HEK293 (cell line): ENCODE measurements at regions of chr4 and their contacts with region 1.

Region 1: DNA sequence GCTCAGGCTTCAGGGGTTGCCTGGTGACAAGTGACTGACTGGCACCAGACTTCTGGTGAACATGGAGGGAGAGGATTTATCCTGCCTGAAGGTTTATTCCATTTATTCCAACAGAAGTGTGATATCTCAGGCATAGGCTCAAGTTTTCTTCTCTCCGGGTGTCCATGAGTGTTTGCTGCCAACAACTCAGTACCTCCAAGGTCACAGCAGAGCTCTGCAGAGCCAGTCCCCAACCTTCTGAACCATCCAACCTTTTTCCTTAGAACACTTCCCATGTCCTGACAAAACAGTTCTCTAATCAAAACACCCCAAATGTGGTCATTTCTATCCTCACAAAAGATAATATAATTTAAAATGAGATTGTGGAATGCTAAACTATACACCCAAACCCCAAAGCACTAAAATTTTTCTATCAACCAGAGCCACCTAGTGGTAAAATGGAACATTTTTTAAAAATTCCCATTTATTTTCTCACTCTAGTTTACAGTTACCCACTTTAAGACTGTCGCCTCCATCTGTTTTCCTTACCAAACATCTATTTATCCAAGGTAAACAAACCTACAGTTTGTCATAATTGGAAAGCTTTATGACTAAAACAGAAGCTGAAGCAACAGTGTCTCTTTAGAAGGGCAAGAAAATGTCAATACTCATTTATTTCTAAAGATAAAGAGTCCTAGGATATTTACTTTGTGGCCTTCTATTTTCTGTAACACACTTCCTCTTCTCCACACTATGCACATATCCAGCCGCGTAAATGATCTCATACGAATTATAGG is 39.6 kb downstream of the TMEM154 start:
- H3K4me3 ChIP-seq: no peak overlapping the region
- H3K27ac ChIP-seq: no peak overlapping the region
- H3K4me1 ChIP-seq: no peaks in the 10 kb centered on the region
- CTCF ChIP-seq: no peak

Region 2: GRCh38 chr4:152454398-152455011 is 185.7 kb before region 1 on chr4:
- CTCF ChIA-PET with region 1: interaction called, 11 read pairs
- POLR2A ChIA-PET with region 1: no interaction called
- H3K4me3 ChIP-seq: no peak overlapping the region
- H3K27ac ChIP-seq: no peak overlapping the region
- H3K4me1 ChIP-seq: no peaks in the 10 kb centered on the region
- CTCF ChIP-seq: no peak

Region 3: GRCh38 chr4:152663203-152664066 is 23.2 kb after region 1 on chr4:
- CTCF ChIA-PET with region 1: no interaction called
- POLR2A ChIA-PET with region 1: no interaction called
- H3K4me3 ChIP-seq: no peak overlapping the region
- H3K27ac ChIP-seq: no peak overlapping the region
- H3K4me1 ChIP-seq: no peaks in the 10 kb centered on the region
- CTCF ChIP-seq: no peak

Region 4: DNA sequence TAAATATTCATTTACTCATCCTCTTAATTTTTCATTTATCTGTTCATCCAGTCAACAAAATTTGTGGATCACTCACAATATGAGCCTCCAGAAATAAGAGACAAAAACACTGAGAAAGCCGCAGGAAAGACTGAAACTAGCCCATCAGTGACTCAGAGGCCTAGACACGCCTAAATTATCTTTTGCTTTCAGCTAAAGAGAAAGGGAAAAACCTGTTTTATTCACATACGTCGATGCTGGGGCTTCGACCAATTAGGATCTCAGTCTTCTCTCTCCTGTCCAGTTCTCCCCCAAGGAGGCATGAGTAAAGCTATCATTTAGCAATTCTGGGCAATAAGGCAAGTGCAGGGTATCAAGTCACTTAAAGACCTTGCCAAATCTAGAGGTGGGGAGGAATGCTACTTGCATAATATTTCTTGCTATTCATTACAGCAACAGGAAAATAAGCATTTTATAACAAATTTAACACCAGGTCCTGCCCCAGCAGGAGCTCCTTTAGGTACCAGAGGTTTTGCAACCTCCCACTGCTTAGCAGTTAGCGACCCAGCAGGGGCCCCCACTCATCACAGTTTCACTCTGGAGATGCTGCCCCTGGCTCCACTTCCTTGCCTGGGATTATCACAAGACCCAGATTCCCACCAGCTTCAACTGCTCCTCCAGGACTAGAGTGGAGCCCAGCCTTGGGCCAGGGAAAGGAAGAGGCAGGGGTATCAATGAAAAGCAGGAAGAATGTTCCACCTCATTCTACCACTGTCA is 69.6 kb after region 1 on chr4:
- CTCF ChIA-PET with region 1: no interaction called
- POLR2A ChIA-PET with region 1: no interaction called
- H3K4me3 ChIP-seq: no peak overlapping the region
- H3K27ac ChIP-seq: no peak overlapping the region
- H3K4me1 ChIP-seq: no peaks in the 10 kb centered on the region
- CTCF ChIP-seq: no peak